ENCODE measurements at regions of chr22 and their contacts with region 1.

Region 1: DNA sequence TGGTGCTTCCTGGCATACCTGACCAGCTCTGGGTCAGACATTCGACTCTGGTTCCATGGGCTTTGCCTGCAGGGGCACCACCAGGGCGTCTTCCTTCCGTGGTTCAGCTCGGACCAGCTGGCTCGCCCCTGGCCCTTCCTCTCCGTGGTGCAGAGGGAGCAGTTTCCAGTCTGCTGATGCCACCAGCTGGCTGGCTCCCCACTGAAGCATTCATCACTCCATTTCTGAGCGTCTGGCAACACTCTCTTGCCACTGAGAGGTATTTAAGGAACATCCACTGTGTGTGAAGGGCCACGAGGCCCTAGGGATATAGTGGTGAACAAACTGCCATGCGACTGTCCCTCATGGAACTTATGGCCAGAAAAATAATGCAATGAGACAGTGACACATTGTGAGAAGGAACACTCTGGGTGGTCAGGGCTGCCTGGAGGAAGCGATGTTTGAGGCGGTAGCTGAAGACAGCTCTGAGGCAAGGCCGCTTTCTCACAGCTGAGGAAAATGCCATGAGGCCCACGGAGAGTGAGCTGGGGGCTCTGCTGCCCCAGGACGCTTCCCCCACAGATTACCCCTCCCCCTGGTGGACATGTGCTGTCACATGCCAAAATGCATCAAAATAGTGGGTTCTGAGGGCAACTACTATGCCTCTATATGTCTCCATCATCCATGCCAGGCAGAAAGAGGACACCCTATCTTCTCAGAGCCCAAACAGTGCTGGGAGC is 44.9 kb upstream of the ARFGAP3 start:
- DNase-seq: no peak
- ATAC-seq: peak; percentile 38; the same call in 1 of the 3 replicates
- H3K4me3 ChIP-seq: no peak overlapping the region
- H3K27ac ChIP-seq: no peak overlapping the region
- H3K4me1 ChIP-seq: peaks cover 6% of the 10 kb centered on the region
- H3K27me3 ChIP-seq: no peaks in the 10 kb centered on the region
- CTCF ChIP-seq: peak; percentile 29 to 52 (median 39); a peak in 5 of 6 replicates
- EP300 ChIP-seq: no peak
- POLR2A ChIP-seq: no peak
- RAD21 ChIP-seq: no peak

Region 2: GRCh38 chr22:42889304-42889703 is 12.6 kb before region 1 on chr22:
- CTCF ChIA-PET with region 1: interaction called, 4 read pairs
- POLR2A ChIA-PET with region 1: interaction called, 3 read pairs
- RAD21 ChIA-PET with region 1: interaction called, 4 read pairs
- SMC1A ChIA-PET with region 1: interaction called, 13 read pairs
- in situ Hi-C with region 1: no loop called
- intact Hi-C with region 1: no loop called
- DNase-seq: peak; percentile 97
- ATAC-seq: peak; percentile 90
- H3K4me3 ChIP-seq: peak overlapping the region; percentile 19; the same call in 1 of the 2 replicates
- H3K27ac ChIP-seq: peak overlapping the region; percentile 84
- H3K4me1 ChIP-seq: peaks cover 58% of the 10 kb centered on the region
- H3K27me3 ChIP-seq: no peaks in the 10 kb centered on the region
- CTCF ChIP-seq: no peak
- EP300 ChIP-seq: peak; percentile 89 to 93
- POLR2A ChIP-seq: peak; percentile 52
- RAD21 ChIP-seq: no peak